B cell (primary cell): ENCODE measurements at regions of chr21 and their contacts with region 1.

Region 1: GRCh38 chr21:35226948-35227744 is 178.0 kb upstream of the RUNX1 start:
- DNase-seq: peak; percentile 80
- ATAC-seq: peak; percentile 84
- H3K4me3 ChIP-seq: peak overlapping the region in 1 of 5 experiments; percentile 4
- H3K4me3 Mint-ChIP-seq: peak overlapping the region; percentile 72
- H3K27ac ChIP-seq: peak overlapping the region; percentile 5 to 68
- H3K27ac Mint-ChIP-seq: peak overlapping the region; percentile 78
- H3K4me1 ChIP-seq: peaks cover 26% of the 10 kb centered on the region in 2 donors
- H3K4me1 Mint-ChIP-seq: peaks cover 29% of the 10 kb centered on the region
- H3K27me3 ChIP-seq: no peaks in the 10 kb centered on the region
- H3K27me3 Mint-ChIP-seq: peaks cover 12% of the 10 kb centered on the region
- CTCF ChIP-seq: no peak

Region 2: DNA sequence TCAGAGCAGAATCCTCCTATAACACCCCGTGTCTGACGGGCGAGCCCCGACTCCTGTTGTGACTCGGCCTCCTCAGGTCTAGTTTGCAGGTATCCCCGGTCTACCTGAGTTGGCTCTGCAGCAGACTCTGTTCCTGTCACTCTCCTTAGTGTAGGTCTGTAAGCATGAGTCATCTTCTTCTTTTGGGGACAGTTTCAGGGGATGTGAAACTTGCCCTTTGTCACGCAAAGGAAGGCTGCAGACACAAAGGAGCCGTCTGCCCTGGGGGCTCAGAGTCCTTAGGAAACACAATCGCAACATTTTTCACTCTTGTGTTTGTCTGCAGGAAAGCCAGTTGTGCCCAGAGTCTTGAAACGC is 361.2 kb before region 1 on chr21:
- CTCF ChIA-PET with region 1: no interaction called
- POLR2A ChIA-PET with region 1: no interaction called
- intact Hi-C with region 1: loop called (anchors 5 kb)
- DNase-seq: peak; percentile 76
- ATAC-seq: peak; percentile 84
- H3K4me3 ChIP-seq: no peak overlapping the region
- H3K4me3 Mint-ChIP-seq: peak overlapping the region; percentile 69
- H3K27ac ChIP-seq: no peak overlapping the region
- H3K27ac Mint-ChIP-seq: peak overlapping the region; percentile 88
- H3K4me1 ChIP-seq: peaks cover 24 to 27% of the 10 kb centered on the region in 2 donors
- H3K4me1 Mint-ChIP-seq: peaks cover 31% of the 10 kb centered on the region
- H3K27me3 ChIP-seq: no peaks in the 10 kb centered on the region
- H3K27me3 Mint-ChIP-seq: no peaks in the 10 kb centered on the region
- CTCF ChIP-seq: no peak

Region 3: DNA sequence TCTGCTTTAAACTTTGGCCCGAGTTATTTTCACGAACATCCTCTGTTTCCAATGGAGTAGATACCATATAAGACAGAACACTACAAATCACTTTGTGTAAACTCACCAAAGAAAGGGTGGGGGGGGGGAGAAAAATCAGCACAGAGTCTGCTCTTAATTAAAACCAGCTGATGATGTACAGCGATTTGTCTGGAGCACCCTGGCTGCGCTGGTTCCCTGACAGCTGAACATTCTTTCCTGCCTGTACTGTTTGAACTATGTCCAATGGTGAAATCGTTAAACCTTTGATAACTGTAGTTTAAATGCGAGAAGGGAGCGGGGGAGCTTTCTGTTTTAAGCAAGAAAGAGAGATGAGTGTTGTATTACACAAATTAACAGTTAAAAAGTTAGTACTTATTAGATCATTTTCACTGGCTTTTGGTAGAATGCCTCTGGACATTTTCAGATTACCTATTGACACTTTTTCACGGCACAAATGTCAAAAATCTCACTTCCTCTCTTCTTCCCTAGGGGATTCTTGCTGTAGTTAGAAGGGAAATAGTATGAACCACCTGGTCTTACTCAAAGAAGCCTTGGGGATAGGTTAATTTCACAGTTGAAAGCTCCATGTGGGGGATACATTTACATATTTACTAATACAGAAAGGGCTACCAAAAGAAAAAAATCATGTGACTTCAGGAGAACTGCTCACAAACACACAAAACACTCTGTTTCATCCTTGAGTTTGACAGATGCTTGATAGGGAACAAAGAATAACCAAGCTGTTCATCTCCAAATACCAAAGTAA is 37.9 kb before region 1 on chr21:
- CTCF ChIA-PET with region 1: no interaction called
- POLR2A ChIA-PET with region 1: no interaction called
- intact Hi-C with region 1: loop called (anchors 1 kb)
- DNase-seq: peak; percentile 81
- ATAC-seq: peak; percentile 95
- H3K4me3 ChIP-seq: peak overlapping the region in 1 of 5 experiments; percentile 36
- H3K4me3 Mint-ChIP-seq: peak overlapping the region; percentile 73
- H3K27ac ChIP-seq: no peak overlapping the region
- H3K27ac Mint-ChIP-seq: peak overlapping the region; percentile 54
- H3K4me1 ChIP-seq: peaks cover 18 to 19% of the 10 kb centered on the region in 2 donors
- H3K4me1 Mint-ChIP-seq: peaks cover 27% of the 10 kb centered on the region
- H3K27me3 ChIP-seq: no peaks in the 10 kb centered on the region
- H3K27me3 Mint-ChIP-seq: no peaks in the 10 kb centered on the region
- CTCF ChIP-seq: no peak

Region 4: DNA sequence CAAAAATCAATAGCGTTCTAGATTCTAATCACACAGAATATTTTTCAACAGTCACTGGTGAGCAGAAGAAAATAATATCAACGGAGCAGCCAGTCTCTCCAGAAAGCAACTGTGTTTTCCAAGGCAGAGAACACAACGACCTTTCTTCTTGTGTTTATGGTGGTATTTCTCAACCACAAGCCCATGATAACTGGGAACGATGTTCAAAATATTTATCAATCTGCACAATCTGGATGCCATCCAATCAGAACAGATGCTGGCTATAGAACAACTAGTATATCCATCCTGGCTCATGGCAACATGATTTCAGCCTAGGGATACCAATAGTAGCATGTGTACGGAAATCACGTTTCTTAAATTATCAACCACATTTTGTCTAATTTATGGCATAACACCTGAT is 15.4 kb before region 1 on chr21:
- CTCF ChIA-PET with region 1: no interaction called
- POLR2A ChIA-PET with region 1: no interaction called
- intact Hi-C with region 1: loop called (anchors 2 kb)
- DNase-seq: no peak
- ATAC-seq: no peak
- H3K4me3 ChIP-seq: no peak overlapping the region
- H3K4me3 Mint-ChIP-seq: no peak overlapping the region
- H3K27ac ChIP-seq: no peak overlapping the region
- H3K27ac Mint-ChIP-seq: no peak overlapping the region
- H3K4me1 ChIP-seq: peaks cover 2 to 4% of the 10 kb centered on the region in 2 donors
- H3K4me1 Mint-ChIP-seq: peaks cover 2% of the 10 kb centered on the region
- H3K27me3 ChIP-seq: peaks cover 0 to 3% (median 0%) of the 10 kb centered on the region in 4 experiments
- H3K27me3 Mint-ChIP-seq: no peaks in the 10 kb centered on the region
- CTCF ChIP-seq: no peak

Region 5: DNA sequence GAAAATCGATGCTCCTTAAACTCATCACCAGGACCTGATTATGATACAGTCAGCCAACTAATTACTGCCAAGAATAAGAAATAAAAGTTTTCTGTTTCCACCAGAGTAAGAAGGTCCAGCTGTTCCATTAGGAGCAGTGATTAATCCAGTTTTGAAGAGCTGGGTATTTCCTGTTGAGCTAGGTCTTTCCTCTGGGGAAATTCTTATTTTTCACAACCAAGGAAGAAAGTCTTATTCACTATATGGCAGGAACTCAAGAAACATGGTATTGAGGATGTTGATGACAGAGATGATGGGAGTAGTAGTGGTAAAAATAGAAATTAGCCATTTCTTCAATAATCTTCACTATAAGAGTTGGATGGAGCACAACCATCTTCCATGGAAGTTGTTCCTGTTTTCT is 196.6 kb after region 1 on chr21:
- CTCF ChIA-PET with region 1: no interaction called
- POLR2A ChIA-PET with region 1: no interaction called
- intact Hi-C with region 1: no loop called
- DNase-seq: no peak
- ATAC-seq: no peak
- H3K4me3 ChIP-seq: no peak overlapping the region
- H3K4me3 Mint-ChIP-seq: no peak overlapping the region
- H3K27ac ChIP-seq: no peak overlapping the region
- H3K27ac Mint-ChIP-seq: no peak overlapping the region
- H3K4me1 ChIP-seq: no peaks in the 10 kb centered on the region
- H3K4me1 Mint-ChIP-seq: no peaks in the 10 kb centered on the region
- H3K27me3 ChIP-seq: no peaks in the 10 kb centered on the region
- H3K27me3 Mint-ChIP-seq: peaks cover 31% of the 10 kb centered on the region
- CTCF ChIP-seq: no peak